ENCODE measurements at regions of chr1 and their contacts with region 1.

Region 1: DNA sequence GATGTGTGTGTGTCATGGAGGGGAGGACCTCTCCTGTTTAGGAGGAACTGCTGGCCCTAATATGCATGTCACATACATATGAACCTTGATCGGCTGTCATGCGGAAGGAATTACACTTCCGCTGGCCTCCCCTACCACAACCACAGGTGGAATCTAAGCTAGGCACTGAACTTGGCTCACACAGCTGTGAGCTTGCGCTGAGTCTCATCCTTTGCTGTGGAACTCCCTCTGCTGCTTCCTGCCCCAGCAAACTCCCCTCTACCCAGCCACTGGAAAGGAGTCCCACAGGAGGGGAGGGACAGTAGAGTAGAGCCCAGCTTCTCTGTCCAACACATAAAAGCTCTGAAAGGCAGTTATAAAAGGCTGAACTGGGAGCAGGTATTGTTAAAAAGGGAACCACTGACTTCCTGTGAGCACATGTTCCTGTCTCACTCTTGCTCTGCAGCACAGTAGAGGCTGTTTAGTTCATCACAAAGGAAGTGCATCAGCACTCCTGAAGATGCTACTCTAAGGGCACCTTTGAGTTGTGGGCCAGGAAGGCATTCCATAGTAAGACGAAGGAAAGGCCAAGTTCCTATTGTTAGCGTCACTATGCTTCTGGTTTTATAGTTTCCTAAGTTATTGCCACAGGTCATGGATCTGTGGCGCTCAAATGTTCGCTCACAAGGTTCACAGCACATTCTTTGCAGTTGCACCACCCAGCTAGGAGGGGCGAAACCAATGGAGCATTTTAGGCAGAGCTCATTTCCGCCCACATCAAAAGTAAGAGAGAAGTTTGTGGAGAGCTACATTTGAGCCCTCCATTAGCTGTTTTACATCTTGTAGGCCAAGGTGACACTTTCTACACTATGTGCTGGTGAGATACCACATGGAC is 17.7 kb upstream of the PTPRC start:
- DNase-seq: peak; percentile 89
- ATAC-seq: peak; percentile 74
- H3K4me3 Mint-ChIP-seq: peak overlapping the region; percentile 75
- H3K27ac Mint-ChIP-seq: peak overlapping the region; percentile 99
- H3K4me1 Mint-ChIP-seq: peaks cover 83% of the 10 kb centered on the region
- H3K27me3 Mint-ChIP-seq: no peaks in the 10 kb centered on the region
- CTCF ChIP-seq: no peak

Region 2: DNA sequence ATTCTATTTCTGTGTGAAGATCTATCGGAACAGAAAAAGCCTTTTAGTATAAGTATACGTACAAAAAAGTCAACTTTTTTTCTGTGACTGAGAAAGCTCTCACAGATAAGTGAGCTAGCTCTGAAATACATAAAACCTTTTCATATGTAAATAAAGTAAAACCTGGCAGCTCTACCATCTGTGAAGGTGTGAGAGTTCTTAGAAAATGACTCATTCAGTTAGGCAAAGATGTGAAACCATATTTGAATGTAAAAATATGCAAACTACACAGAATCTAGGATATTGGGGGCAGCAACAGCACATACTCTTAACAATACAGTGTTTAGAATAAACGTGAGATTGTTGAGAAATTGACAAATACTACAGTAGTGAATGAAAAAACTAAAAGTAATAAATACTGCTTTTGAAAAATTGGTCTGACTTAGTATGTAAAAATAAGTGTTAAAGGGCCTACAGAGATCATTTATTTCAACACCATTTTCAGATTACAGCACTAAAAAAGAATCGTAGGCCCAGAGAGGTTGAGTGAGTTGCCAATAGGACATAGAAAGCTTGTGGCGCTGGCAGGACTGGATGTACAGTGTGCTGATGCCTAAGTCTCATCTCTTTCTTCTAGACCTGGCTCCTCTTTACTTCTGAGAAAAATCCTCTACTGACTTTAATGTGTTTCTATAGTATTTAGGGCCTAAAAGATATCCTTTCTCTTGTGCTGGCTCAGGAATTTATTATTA is 100.5 kb before region 1 on chr1:
- CTCF ChIA-PET with region 1: interaction called, 8 read pairs
- POLR2A ChIA-PET with region 1: interaction called, 17 read pairs
- intact Hi-C with region 1: loop called (anchors 5 kb)
- DNase-seq: peak; percentile 37
- ATAC-seq: peak; percentile 60
- H3K4me3 Mint-ChIP-seq: peak overlapping the region; percentile 72
- H3K27ac Mint-ChIP-seq: peak overlapping the region; percentile 92
- H3K4me1 Mint-ChIP-seq: peaks cover 68% of the 10 kb centered on the region
- H3K27me3 Mint-ChIP-seq: no peaks in the 10 kb centered on the region
- CTCF ChIP-seq: no peak

Region 3: DNA sequence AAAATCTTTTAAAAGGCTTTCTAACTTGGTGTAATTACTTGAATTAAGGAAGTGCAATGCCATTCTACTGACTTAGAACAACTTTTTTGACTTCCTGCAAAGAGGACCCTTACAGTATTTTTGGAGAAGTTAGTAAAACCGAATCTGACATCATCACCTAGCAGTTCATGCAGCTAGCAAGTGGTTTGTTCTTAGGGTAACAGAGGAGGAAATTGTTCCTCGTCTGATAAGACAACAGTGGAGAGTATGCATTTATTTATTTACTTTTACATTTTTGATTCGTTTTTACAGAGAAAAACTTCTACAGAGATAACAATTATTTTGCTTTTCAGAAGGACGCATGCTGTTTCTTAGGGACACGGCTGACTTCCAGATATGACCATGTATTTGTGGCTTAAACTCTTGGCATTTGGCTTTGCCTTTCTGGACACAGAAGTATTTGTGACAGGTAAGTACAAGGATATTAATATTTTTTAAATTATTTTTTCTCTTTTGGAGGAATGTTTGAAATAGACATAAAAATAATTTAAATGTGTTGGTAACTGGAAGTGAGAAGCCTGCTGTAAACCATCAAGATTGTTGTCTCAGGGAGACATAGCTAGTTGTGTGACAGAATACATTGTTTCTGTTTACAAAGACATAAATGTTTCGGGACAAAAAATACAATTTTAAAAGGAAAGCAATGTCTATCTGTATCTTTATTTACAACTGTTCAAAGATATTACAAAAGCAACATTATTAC is 17.9 kb after region 1 on chr1 and contains the start of gene PTPRC:
- CTCF ChIA-PET with region 1: interaction called, 95 read pairs
- POLR2A ChIA-PET with region 1: interaction called, 118 read pairs
- intact Hi-C with region 1: loop called (anchors 2 kb)
- DNase-seq: no peak
- ATAC-seq: peak; percentile 57
- H3K4me3 Mint-ChIP-seq: peak within 1 kb of the TSS; percentile 86
- H3K27ac Mint-ChIP-seq: peak within 1 kb of the TSS; percentile 97
- H3K4me1 Mint-ChIP-seq: peaks cover 39% of the 10 kb centered on the region
- H3K27me3 Mint-ChIP-seq: no peaks in the 10 kb centered on the region
- CTCF ChIP-seq: no peak
- total RNA-seq, gene PTPRC: 475 to 499 TPM

Region 4: GRCh38 chr1:198657550-198658064 is 36.4 kb after region 1 on chr1:
- CTCF ChIA-PET with region 1: interaction called, 3 read pairs
- POLR2A ChIA-PET with region 1: interaction called, 38 read pairs
- intact Hi-C with region 1: loop called (anchors 5 kb)
- DNase-seq: peak; percentile 52
- ATAC-seq: peak; percentile 40
- H3K4me3 Mint-ChIP-seq: peak overlapping the region; percentile 71
- H3K27ac Mint-ChIP-seq: peak overlapping the region; percentile 96
- H3K4me1 Mint-ChIP-seq: peaks cover 64% of the 10 kb centered on the region
- H3K27me3 Mint-ChIP-seq: no peaks in the 10 kb centered on the region
- CTCF ChIP-seq: no peak